ENCODE measurements at regions of chr2 and their contacts with region 1.

Region 1: DNA sequence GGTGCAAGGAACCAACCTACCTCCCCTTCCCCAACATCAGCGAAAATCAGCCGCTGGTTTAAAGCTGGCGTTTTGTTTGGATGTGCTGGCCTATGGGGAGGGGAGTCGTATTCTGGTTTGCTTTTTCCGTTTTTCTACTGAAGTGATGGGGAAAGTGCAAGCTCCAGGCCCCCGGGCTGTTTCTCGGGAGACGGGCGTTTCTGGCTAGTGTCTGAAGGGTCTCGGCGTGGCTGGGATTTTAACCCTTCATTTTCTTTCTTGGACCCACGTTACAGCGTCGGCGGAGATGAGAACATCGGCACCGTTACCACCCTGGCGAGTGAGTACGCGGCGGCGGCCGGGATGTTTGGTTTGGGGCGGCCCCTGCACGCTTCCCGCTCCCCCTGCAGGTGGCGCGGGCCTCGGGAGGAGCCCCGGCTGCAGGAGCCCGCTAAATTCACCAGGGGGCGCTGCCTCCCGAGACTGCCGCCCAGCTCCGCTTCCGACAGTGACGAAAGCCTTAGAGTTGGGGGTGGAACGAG is 70.7 kb downstream of the PLB1 start:
- DNase-seq: peak; percentile 81 to 86 (median 82)
- H3K4me3 ChIP-seq: peak overlapping the region; percentile 81 to 85 (median 84)
- H3K4me3 Mint-ChIP-seq: peak overlapping the region; percentile 92 to 95
- H3K27ac ChIP-seq: peak overlapping the region; percentile 17 to 77
- H3K27ac Mint-ChIP-seq: peak overlapping the region; percentile 84 to 97 (median 94)
- H3K4me1 ChIP-seq: peaks cover 6 to 13% of the 10 kb centered on the region in 2 donors
- H3K4me1 Mint-ChIP-seq: peaks cover 6% of the 10 kb centered on the region
- H3K27me3 ChIP-seq: no peaks in the 10 kb centered on the region
- H3K27me3 Mint-ChIP-seq: peaks cover 0 to 3% (median 2%) of the 10 kb centered on the region in 3 donors
- CTCF ChIP-seq: peak; percentile 100

Region 2: GRCh38 chr2:28521663-28522062 is 44.9 kb before region 1 on chr2:
- intact Hi-C with region 1: no loop called
- DNase-seq: no peak
- H3K4me3 ChIP-seq: no peak overlapping the region
- H3K4me3 Mint-ChIP-seq: no peak overlapping the region
- H3K27ac ChIP-seq: no peak overlapping the region
- H3K27ac Mint-ChIP-seq: peak overlapping the region in 1 of 7 donors; percentile 26
- H3K4me1 ChIP-seq: no peaks in the 10 kb centered on the region
- H3K4me1 Mint-ChIP-seq: peaks cover 2% of the 10 kb centered on the region
- H3K27me3 ChIP-seq: no peaks in the 10 kb centered on the region
- H3K27me3 Mint-ChIP-seq: peaks cover 2 to 16% (median 9%) of the 10 kb centered on the region in 3 donors
- CTCF ChIP-seq: no peak

Region 3: DNA sequence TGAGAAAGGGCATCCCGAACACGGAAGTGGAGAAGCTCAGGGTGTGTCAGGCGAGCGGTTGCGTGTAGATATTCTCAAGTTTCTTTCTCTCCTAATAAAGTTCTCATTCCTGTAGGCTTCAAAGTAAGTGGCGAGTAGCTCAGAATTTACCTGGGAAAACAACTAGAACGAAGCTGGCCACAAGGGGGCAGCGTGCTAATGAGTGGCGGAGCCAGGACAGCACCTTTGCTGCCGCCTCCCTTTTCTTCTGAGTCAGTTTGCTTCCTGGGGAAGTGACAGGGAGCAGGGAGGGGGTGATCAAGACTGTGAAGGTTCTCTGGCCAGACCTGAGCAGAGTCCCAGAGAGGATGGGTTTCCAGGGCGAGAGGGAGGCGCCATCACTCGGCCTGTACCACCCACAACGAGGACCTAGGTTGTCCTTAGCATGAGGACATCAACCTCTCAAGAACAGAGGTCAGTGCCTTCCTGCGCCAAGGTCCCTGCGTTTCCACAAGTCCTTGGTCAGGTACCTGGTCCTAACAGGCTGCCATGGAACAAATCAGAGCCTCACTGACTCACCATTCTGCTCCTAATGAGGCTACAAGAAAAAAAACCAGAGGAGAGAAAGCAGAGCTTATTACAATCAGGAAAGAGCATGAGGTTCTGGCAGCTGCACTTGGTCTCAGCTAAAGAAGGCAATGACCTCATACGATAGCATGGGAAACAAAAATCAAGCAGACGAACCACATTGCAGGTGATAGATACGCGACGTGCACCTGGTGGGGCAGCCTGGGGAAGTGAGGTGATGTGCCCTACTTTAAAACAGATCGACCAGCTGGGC is 27.9 kb after region 1 on chr2:
- intact Hi-C with region 1: loop called in 1 of 2 experiments (anchors 2 kb)
- DNase-seq: peak; percentile 82 to 93 (median 89)
- H3K4me3 ChIP-seq: peak overlapping the region in 1 of 3 experiments; percentile 45
- H3K4me3 Mint-ChIP-seq: peak overlapping the region; percentile 60 to 77
- H3K27ac ChIP-seq: peak overlapping the region in 1 of 2 donors; percentile 62
- H3K27ac Mint-ChIP-seq: peak overlapping the region; percentile 71 to 93 (median 87)
- H3K4me1 ChIP-seq: peaks cover 14 to 16% of the 10 kb centered on the region in 2 donors
- H3K4me1 Mint-ChIP-seq: peaks cover 16% of the 10 kb centered on the region
- H3K27me3 ChIP-seq: no peaks in the 10 kb centered on the region
- H3K27me3 Mint-ChIP-seq: peaks cover 0 to 6% (median 2%) of the 10 kb centered on the region in 3 donors
- CTCF ChIP-seq: peak; percentile 91

Region 4: DNA sequence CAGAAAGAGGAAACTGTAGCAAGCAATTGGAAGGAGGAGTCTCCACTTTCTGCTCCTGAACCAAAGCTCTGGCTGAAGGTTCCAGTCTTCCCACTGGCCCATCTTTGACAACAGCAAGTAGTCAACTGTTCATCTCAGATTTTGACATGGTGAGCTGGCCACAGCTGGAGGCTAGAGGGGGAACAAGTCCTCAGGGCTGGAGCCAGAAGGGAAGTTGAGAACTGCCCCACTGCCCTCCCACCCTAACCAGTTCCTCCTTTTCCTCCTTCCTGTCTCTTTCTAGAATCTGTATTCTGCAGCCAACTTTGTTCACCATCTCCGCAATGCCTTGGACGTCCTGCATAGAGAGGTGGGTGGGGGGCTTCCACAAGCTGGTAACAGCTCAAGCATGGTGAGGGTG is 35.0 kb after region 1 on chr2:
- intact Hi-C with region 1: loop called in 1 of 2 experiments (anchors 5 kb)
- DNase-seq: peak; percentile 70 to 84 (median 79)
- H3K4me3 ChIP-seq: peak overlapping the region; percentile 39 to 73 (median 59)
- H3K4me3 Mint-ChIP-seq: peak overlapping the region; percentile 70 to 91
- H3K27ac ChIP-seq: peak overlapping the region; percentile 79 to 82
- H3K27ac Mint-ChIP-seq: peak overlapping the region; percentile 92 to 97 (median 96)
- H3K4me1 ChIP-seq: peaks cover 55 to 56% of the 10 kb centered on the region in 2 donors
- H3K4me1 Mint-ChIP-seq: peaks cover 60% of the 10 kb centered on the region
- H3K27me3 ChIP-seq: no peaks in the 10 kb centered on the region
- H3K27me3 Mint-ChIP-seq: peaks cover 0 to 7% (median 2%) of the 10 kb centered on the region in 3 donors
- CTCF ChIP-seq: no peak